ENCODE measurements at regions of chr3 and their contacts with region 1.

Region 1: GRCh38 chr3:48188266-48189201 is at the start of gene CDC25A:
- DNase-seq: peak; percentile 69 to 94 (median 87)
- ATAC-seq: peak; percentile 100
- H3K4me3 ChIP-seq: peak within 1 kb of the TSS; percentile 88
- H3K4me3 Mint-ChIP-seq: peak within 1 kb of the TSS; percentile 89 to 96 (median 94)
- H3K27ac ChIP-seq: peak within 1 kb of the TSS; percentile 57
- H3K27ac Mint-ChIP-seq: peak within 1 kb of the TSS in 8 of 9 donors; percentile 8 to 84 (median 66)
- H3K4me1 ChIP-seq: peaks cover 4 to 6% of the 10 kb centered on the region in 2 donors
- H3K4me1 Mint-ChIP-seq: peaks cover 6 to 36% (median 13%) of the 10 kb centered on the region in 7 donors
- H3K27me3 ChIP-seq: no peaks in the 10 kb centered on the region
- H3K27me3 Mint-ChIP-seq: peaks cover 0 to 21% (median 14%) of the 10 kb centered on the region in 5 donors
- total RNA-seq, gene CDC25A: 0.61 to 20.7 TPM in 2 of 5 experiments, not detected in the others

Region 2: GRCh38 chr3:47282424-47283192 is 905.9 kb before region 1 on chr3 and contains the starts of genes KIF9 and KLHL18:
- CTCF ChIA-PET with region 1: no interaction called
- POLR2A ChIA-PET with region 1: no interaction called
- intact Hi-C with region 1: no loop called
- DNase-seq: peak; percentile 86 to 98 (median 97)
- ATAC-seq: peak; percentile 91
- H3K4me3 ChIP-seq: peak within 1 kb of the TSS; percentile 76
- H3K4me3 Mint-ChIP-seq: peak within 1 kb of the TSS; percentile 89 to 100 (median 98)
- H3K27ac ChIP-seq: peak within 1 kb of the TSS; percentile 93
- H3K27ac Mint-ChIP-seq: peak within 1 kb of the TSS; percentile 98 to 100 (median 99)
- H3K4me1 ChIP-seq: peaks cover 14 to 23% of the 10 kb centered on the region in 2 donors
- H3K4me1 Mint-ChIP-seq: peaks cover 29 to 56% (median 43%) of the 10 kb centered on the region in 7 donors
- H3K27me3 ChIP-seq: no peaks in the 10 kb centered on the region
- H3K27me3 Mint-ChIP-seq: no peaks in the 10 kb centered on the region
- total RNA-seq, gene KIF9: 2.7 to 15.0 (median 4.1) TPM
- total RNA-seq, gene KLHL18: 21.7 to 47.5 (median 24.5) TPM

Region 3: GRCh38 chr3:47475570-47476329 is 712.8 kb before region 1 on chr3 and contains the start of gene SCAP:
- CTCF ChIA-PET with region 1: no interaction called
- POLR2A ChIA-PET with region 1: no interaction called
- intact Hi-C with region 1: loop called in 1 of 2 experiments (anchors 2 kb)
- DNase-seq: peak; percentile 93 to 99 (median 95)
- ATAC-seq: peak; percentile 97
- H3K4me3 ChIP-seq: peak within 1 kb of the TSS; percentile 69
- H3K4me3 Mint-ChIP-seq: peak within 1 kb of the TSS; percentile 89 to 98 (median 93)
- H3K27ac ChIP-seq: peak within 1 kb of the TSS; percentile 90
- H3K27ac Mint-ChIP-seq: peak within 1 kb of the TSS; percentile 86 to 96 (median 93)
- H3K4me1 ChIP-seq: peaks cover 19 to 20% of the 10 kb centered on the region in 2 donors
- H3K4me1 Mint-ChIP-seq: peaks cover 20 to 54% (median 36%) of the 10 kb centered on the region in 7 donors
- H3K27me3 ChIP-seq: no peaks in the 10 kb centered on the region
- H3K27me3 Mint-ChIP-seq: no peaks in the 10 kb centered on the region
- total RNA-seq, gene SCAP: 80.6 to 95.4 (median 92.9) TPM

Region 4: GRCh38 chr3:48088749-48089466 is 99.6 kb before region 1 on chr3:
- CTCF ChIA-PET with region 1: no interaction called
- POLR2A ChIA-PET with region 1: no interaction called
- intact Hi-C with region 1: loop called (anchors 1 kb)
- DNase-seq: peak; percentile 89 to 96 (median 94)
- ATAC-seq: peak; percentile 97
- H3K4me3 ChIP-seq: peak overlapping the region; percentile 85
- H3K4me3 Mint-ChIP-seq: peak overlapping the region; percentile 90 to 99 (median 96)
- H3K27ac ChIP-seq: peak overlapping the region; percentile 95
- H3K27ac Mint-ChIP-seq: peak overlapping the region; percentile 71 to 99 (median 98)
- H3K4me1 ChIP-seq: peaks cover 7 to 11% of the 10 kb centered on the region in 2 donors
- H3K4me1 Mint-ChIP-seq: peaks cover 14 to 33% (median 29%) of the 10 kb centered on the region in 7 donors
- H3K27me3 ChIP-seq: no peaks in the 10 kb centered on the region
- H3K27me3 Mint-ChIP-seq: peaks cover 0 to 18% (median 0%) of the 10 kb centered on the region in 5 donors

Region 5: DNA sequence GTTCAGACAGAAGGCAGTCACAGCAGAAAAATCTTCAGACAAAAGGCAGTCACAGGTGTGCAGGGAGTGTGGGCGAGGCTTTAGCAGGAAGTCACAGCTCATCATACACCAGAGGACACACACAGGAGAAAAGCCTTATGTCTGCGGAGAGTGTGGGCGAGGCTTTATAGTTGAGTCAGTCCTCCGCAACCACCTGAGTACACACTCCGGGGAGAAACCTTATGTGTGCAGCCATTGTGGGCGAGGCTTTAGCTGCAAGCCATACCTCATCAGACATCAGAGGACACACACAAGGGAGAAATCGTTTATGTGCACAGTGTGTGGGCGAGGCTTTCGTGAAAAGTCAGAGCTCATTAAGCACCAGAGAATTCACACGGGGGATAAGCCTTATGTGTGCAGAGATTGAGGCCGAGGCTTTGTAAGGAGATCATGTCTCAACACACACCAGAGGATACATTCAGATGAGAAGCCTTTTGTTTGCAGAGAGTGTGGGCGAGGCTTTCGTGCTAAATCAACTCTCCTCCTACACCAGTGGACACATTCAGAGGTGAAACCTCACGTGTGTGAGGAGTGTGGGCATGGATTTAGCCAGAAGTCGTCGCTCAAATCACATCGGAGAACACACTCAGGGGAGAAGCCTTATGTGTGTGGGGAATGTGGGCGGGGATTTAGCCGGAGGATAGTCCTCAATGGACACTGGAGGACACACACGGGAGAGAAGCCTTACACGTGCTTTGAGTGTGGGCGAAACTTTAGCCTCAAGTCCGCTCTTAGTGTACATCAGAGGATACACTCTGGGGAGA is 80.0 kb after region 1 on chr3:
- CTCF ChIA-PET with region 1: no interaction called
- POLR2A ChIA-PET with region 1: no interaction called
- intact Hi-C with region 1: loop called in 1 of 2 experiments (anchors 1 kb)
- DNase-seq: peak; percentile 25 to 92 (median 80)
- ATAC-seq: peak; percentile 97
- H3K4me3 ChIP-seq: peak overlapping the region; percentile 40
- H3K4me3 Mint-ChIP-seq: peak overlapping the region; percentile 74 to 93 (median 82)
- H3K27ac ChIP-seq: peak overlapping the region; percentile 71
- H3K27ac Mint-ChIP-seq: peak overlapping the region; percentile 89 to 99 (median 93)
- H3K4me1 ChIP-seq: peaks cover 14 to 26% of the 10 kb centered on the region in 2 donors
- H3K4me1 Mint-ChIP-seq: peaks cover 17 to 40% (median 39%) of the 10 kb centered on the region in 7 donors
- H3K27me3 ChIP-seq: no peaks in the 10 kb centered on the region
- H3K27me3 Mint-ChIP-seq: no peaks in the 10 kb centered on the region

Region 6: GRCh38 chr3:48609088-48610005 is 420.8 kb after region 1 on chr3 and contains the start of gene UQCRC1:
- CTCF ChIA-PET with region 1: no interaction called
- POLR2A ChIA-PET with region 1: no interaction called
- intact Hi-C with region 1: loop called in 1 of 2 experiments (anchors 1 kb)
- DNase-seq: peak; percentile 85 to 94 (median 93)
- ATAC-seq: peak; percentile 99
- H3K4me3 ChIP-seq: peak within 1 kb of the TSS; percentile 96
- H3K4me3 Mint-ChIP-seq: peak within 1 kb of the TSS; percentile 86 to 100 (median 98)
- H3K27ac ChIP-seq: peak within 1 kb of the TSS; percentile 84
- H3K27ac Mint-ChIP-seq: peak within 1 kb of the TSS; percentile 91 to 99 (median 97)
- H3K4me1 ChIP-seq: peaks cover 10 to 12% of the 10 kb centered on the region in 2 donors
- H3K4me1 Mint-ChIP-seq: peaks cover 12 to 31% (median 19%) of the 10 kb centered on the region in 7 donors
- H3K27me3 ChIP-seq: no peaks in the 10 kb centered on the region
- H3K27me3 Mint-ChIP-seq: no peaks in the 10 kb centered on the region
- total RNA-seq, gene UQCRC1: 77.3 to 156 (median 91.7) TPM

Region 7: DNA sequence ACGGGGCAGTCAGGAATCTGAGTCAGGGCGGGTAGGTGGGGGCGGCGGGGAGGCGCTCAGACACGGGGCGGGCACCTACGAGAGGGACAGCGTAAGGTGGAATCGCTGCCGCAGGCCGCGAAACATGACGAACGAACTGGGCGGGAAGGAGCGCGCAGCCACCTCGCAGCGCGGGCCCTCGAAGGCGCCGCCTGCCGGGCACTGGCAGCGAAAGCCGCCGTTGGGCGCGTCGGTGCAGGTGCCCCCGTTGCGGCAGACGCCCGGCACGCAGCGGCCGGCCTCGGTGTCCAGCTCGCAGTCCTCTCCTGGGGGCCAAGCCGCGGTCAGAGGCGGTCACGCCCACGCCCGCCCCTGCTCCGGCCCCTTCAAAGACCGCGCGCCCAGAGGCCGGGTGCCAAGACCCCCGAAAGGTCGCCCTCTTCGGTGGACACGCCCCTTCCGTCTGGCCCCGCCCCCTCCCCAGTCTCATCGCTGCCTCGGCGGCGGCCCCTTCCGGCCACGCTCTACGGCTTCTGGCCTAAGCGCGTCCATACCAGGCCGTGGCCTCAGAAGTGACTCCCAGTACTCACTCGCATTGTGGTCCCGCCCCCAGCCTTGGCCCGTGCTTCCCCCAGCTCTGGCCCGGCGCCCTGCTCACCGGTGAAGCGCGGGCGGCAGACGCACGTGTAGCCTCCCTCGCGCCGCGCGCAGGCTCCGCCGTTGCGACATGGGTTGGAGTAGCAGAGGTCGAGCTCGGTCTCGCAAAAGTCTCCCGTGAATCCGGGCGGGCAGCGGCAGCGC is 467.7 kb after region 1 on chr3:
- CTCF ChIA-PET with region 1: no interaction called
- POLR2A ChIA-PET with region 1: no interaction called
- intact Hi-C with region 1: loop called in 1 of 2 experiments (anchors 5 kb)
- DNase-seq: peak; percentile 75 to 87 (median 86)
- ATAC-seq: peak; percentile 90
- H3K4me3 ChIP-seq: peak overlapping the region; percentile 70
- H3K4me3 Mint-ChIP-seq: peak overlapping the region; percentile 67 to 86 (median 80)
- H3K27ac ChIP-seq: peak overlapping the region; percentile 65
- H3K27ac Mint-ChIP-seq: peak overlapping the region; percentile 42 to 88 (median 79)
- H3K4me1 ChIP-seq: peaks cover 12 to 14% of the 10 kb centered on the region in 2 donors
- H3K4me1 Mint-ChIP-seq: peaks cover 6 to 23% (median 9%) of the 10 kb centered on the region in 7 donors
- H3K27me3 ChIP-seq: no peaks in the 10 kb centered on the region
- H3K27me3 Mint-ChIP-seq: peaks cover 0 to 15% (median 5%) of the 10 kb centered on the region in 5 donors

Measured in naive thymus-derived CD4-positive, alpha-beta T cell (primary cell).